Sciatic nerve (tissue), 2 donors: ENCODE measurements at regions of chr3 and their contacts with region 1.

Region 1: GRCh38 chr3:181567311-181568075 is 144.2 kb upstream of the SOX2 start:
- DNase-seq: no peak
- ATAC-seq: no peak

Region 2: DNA sequence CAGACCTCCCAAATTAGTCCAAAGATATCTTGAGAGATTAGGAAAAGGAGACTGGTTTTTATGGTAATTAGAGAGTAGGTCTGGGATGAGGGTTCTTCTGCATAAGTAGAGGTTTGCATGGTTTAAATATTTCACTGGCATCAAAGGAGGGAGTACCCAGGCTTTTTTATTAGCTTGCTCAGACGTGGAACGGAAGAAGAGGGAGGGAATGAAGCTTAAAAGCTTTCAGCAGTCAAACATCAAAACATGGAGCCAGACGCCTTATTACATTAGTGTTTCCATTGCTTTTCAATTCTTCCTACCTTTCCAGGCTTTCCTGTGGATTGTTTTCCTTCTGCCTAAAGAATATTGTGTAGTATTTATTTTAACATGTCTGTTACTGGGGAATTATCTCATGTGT is 197.9 kb before region 1 on chr3:
- intact Hi-C with region 1: loop called (anchors 5 kb)
- DNase-seq: no peak
- ATAC-seq: no peak